PC-9 (cell line): ENCODE measurements at regions of chr1 and their contacts with region 1.

Region 1: DNA sequence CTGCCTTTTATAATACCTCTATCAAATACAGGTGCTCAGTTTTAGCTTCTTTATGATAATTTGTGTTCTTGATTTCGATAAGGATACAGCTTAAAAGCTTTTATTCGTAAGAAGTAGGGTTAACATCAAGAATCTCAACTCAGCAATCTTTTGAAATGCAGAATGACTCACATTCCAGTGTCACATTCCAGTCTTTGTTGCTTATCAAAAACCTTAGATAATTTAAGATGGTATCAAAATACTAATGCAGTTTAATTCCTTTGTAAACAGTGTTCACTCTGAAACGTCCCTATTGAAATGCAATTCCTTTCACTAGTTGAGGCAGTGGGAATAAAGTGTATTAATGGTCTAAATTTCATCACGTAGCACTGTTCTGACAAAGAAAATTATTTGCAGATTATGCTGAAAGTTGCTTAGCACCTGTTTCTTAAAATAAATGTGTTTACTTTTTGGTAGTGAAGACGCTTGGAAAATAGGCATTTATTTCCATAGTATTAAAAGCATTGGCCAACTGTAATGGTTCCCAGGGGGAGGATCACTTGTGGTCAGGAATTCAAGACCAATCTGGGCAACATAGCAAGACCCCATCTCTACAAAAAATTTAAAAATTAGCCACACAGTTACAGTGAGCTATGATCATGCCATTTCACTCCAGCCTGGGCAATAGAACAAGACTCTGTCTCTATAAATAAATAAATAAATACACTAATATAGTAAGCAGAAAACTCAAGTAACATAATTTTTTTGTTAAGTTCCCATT is 10.1 kb upstream of the CNN3 start:
- DNase-seq: peak in 1 of 2 experiments; percentile 94
- H3K4me3 ChIP-seq: no peak overlapping the region
- H3K27ac ChIP-seq: peak overlapping the region; percentile 21; the same call in 1 of the 2 replicates
- H3K4me1 ChIP-seq: peaks cover 31% of the 10 kb centered on the region
- H3K27me3 ChIP-seq: no peaks in the 10 kb centered on the region
- CTCF ChIP-seq: no peak

Region 2: GRCh38 chr1:94978401-94978800 is 41.4 kb after region 1 on chr1:
- CTCF ChIA-PET with region 1: no interaction called
- POLR2A ChIA-PET with region 1: interaction called, 10 read pairs
- intact Hi-C with region 1: no loop called
- DNase-seq: no peak
- H3K4me3 ChIP-seq: no peak overlapping the region
- H3K27ac ChIP-seq: no peak overlapping the region
- H3K4me1 ChIP-seq: peaks cover 13% of the 10 kb centered on the region
- H3K27me3 ChIP-seq: no peaks in the 10 kb centered on the region
- CTCF ChIP-seq: no peak